PC-3 (cell line): ENCODE measurements at regions of chr6 and their contacts with region 1.

Region 1: GRCh38 chr6:63352587-63353285 is 33.0 kb upstream of the LGSN start:
- DNase-seq: peak; percentile 57
- ATAC-seq: peak; percentile 85
- H3K4me3 ChIP-seq: no peak overlapping the region
- H3K27ac ChIP-seq: no peak overlapping the region
- H3K4me1 ChIP-seq: peaks cover 23% of the 10 kb centered on the region
- H3K27me3 ChIP-seq: no peaks in the 10 kb centered on the region
- CTCF ChIP-seq: peak; percentile 69

Region 2: GRCh38 chr6:63214816-63215215 is 137.9 kb before region 1 on chr6:
- CTCF ChIA-PET with region 1: no interaction called
- POLR2A ChIA-PET with region 1: no interaction called
- intact Hi-C with region 1: no loop called
- DNase-seq: no peak
- ATAC-seq: no peak
- H3K4me3 ChIP-seq: no peak overlapping the region
- H3K27ac ChIP-seq: no peak overlapping the region
- H3K4me1 ChIP-seq: no peaks in the 10 kb centered on the region
- H3K27me3 ChIP-seq: no peaks in the 10 kb centered on the region
- CTCF ChIP-seq: no peak

Region 3: DNA sequence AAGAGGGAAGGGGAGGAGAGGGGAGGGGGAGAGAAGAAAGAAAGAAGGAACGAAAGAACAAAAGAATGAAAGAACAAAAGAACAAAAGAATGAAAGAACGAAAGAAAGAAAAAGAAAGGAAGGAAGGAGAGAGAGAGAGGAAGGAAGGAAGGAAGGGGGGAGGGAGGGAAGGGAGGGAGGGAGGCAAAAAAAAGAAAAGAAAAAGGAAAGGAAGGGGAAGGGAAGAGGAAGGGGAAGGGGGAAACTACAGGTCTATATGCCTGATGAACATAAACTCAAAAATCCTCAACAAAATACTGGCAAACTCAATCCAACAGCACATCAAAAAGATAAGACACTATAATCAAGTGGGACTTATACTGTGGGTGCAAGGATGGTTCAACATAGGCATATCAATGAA is 19.3 kb before region 1 on chr6:
- CTCF ChIA-PET with region 1: no interaction called
- POLR2A ChIA-PET with region 1: no interaction called
- intact Hi-C with region 1: no loop called
- DNase-seq: no peak
- ATAC-seq: no peak
- H3K4me3 ChIP-seq: no peak overlapping the region
- H3K27ac ChIP-seq: no peak overlapping the region
- H3K4me1 ChIP-seq: no peaks in the 10 kb centered on the region
- H3K27me3 ChIP-seq: no peaks in the 10 kb centered on the region
- CTCF ChIP-seq: no peak

Region 4: GRCh38 chr6:63571881-63572732 is 219.4 kb after region 1 on chr6 and contains the starts of genes LOC128125822 and PTP4A1:
- CTCF ChIA-PET with region 1: interaction called, 3 read pairs
- POLR2A ChIA-PET with region 1: interaction called, 6 read pairs
- intact Hi-C with region 1: loop called (anchors 1 kb)
- DNase-seq: peak; percentile 93
- ATAC-seq: peak; percentile 86
- H3K4me3 ChIP-seq: peak within 1 kb of the TSS; percentile 84
- H3K27ac ChIP-seq: peak within 1 kb of the TSS; percentile 99
- H3K4me1 ChIP-seq: peaks cover 18% of the 10 kb centered on the region
- H3K27me3 ChIP-seq: no peaks in the 10 kb centered on the region
- CTCF ChIP-seq: no peak
- total RNA-seq, gene PTP4A1: 29.9 and 45.7 TPM in 2 replicates

Region 5: DNA sequence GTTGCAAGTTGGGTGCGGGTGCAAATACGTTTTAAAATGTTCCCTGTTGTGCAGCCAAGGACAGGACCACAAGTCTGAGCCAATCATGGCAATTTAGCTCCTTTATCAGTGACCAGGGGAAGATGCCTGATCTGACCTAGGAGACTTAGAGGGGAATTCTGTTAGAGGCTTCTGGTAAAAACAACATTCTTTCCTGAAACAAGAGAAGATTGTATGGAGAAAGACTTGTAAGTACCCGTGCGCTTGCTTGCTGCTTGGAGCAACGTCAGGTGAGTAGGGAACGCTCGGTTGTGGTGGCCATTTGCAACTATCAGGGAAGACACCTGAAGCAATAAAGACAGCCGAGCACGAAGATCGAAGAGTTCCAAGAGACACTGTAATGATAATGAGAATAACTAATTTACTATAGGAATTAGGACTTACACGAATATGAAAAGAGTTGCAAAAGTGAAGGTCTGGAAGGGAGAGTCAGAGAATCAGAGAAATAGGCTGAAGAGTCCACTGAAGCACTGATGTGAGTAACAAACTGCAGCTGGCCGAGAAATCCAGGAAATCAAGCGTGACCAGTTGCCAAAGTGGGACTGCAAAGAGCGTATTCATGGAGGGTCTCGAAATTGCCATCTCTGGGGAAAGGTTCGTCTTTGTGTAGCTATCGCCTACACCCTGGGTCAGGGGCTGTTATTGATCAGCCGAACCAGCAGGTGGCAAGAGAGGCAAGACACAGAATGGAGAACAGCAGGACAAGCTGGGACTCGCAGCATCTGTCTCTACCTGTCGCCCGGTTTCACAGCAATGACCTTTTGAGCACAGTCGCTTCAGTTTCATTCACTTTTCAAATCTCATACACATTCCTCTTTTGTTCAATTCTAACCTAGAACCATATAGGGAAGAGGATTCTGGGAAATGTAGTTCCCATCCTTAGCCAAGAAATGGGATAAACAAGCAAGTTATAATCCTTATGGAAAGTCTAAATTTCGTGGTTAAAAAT is 245.6 kb after region 1 on chr6:
- CTCF ChIA-PET with region 1: interaction called, 23 read pairs
- POLR2A ChIA-PET with region 1: no interaction called
- intact Hi-C with region 1: loop called (anchors 1 kb)
- DNase-seq: peak; percentile 65
- ATAC-seq: peak; percentile 95
- H3K4me3 ChIP-seq: peak overlapping the region; percentile 87
- H3K27ac ChIP-seq: no peak overlapping the region
- H3K4me1 ChIP-seq: peaks cover 6% of the 10 kb centered on the region; the same call in 1 of the 2 replicates
- H3K27me3 ChIP-seq: no peaks in the 10 kb centered on the region
- CTCF ChIP-seq: peak; percentile 80